Heart left ventricle (tissue), 16 donors: ENCODE measurements at regions of chr4 and their contacts with region 1.

Region 1: DNA sequence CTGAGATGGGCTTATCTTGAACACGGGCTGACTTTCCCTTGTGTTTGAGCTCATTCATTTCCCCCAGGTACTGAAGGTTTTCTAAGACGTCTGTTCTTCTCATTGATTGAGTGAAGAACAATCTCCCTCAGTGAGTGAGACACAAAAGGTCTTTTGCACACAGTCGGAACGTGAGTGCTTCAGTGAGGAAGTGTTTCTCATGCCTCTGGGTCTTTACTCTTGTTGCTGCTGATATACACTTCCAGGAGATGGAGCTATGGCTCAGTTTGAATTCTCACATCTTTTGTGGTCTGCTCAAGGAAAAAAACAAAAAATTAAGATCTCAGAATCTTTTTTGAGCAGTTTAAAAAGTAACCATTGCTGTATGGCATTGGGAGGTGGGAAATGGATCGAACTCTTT is 981.9 kb upstream of the TENM3 start:
- DNase-seq: no peak
- ATAC-seq: peak in 3 of 4 donors; percentile 41 to 58 (median 55)
- H3K4me3 ChIP-seq: no peak overlapping the region
- H3K27ac ChIP-seq: no peak overlapping the region
- H3K4me1 ChIP-seq: peaks cover 0 to 4% (median 0%) of the 10 kb centered on the region in 12 donors
- H3K27me3 ChIP-seq: no peaks in the 10 kb centered on the region
- CTCF ChIP-seq: peak in 10 of 12 donors; percentile 11 to 53 (median 34)
- POLR2A ChIP-seq: no peak

Region 2: GRCh38 chr4:181143250-181143854 is 117.9 kb before region 1 on chr4:
- intact Hi-C with region 1: loop called in 2 of 10 experiments (anchors 5 kb)
- DNase-seq: peak; percentile 47 to 80 (median 67)
- ATAC-seq: peak in 3 of 4 donors; percentile 32 to 65 (median 60)
- H3K4me3 ChIP-seq: no peak overlapping the region
- H3K27ac ChIP-seq: no peak overlapping the region
- H3K4me1 ChIP-seq: no peaks in the 10 kb centered on the region
- H3K27me3 ChIP-seq: peaks cover 0 to 15% (median 0%) of the 10 kb centered on the region in 9 donors
- CTCF ChIP-seq: peak; percentile 82 to 95 (median 90)
- POLR2A ChIP-seq: no peak

Region 3: GRCh38 chr4:181331214-181331613 is 69.9 kb after region 1 on chr4:
- intact Hi-C with region 1: loop called in 1 of 10 experiments (anchors 2 kb)
- DNase-seq: no peak
- ATAC-seq: peak in 2 of 4 donors; percentile 6 to 27
- H3K4me3 ChIP-seq: peak overlapping the region in 1 of 12 donors; percentile 4
- H3K27ac ChIP-seq: peak overlapping the region in 4 of 12 donors; percentile 2 to 66 (median 46)
- H3K4me1 ChIP-seq: peaks cover 0 to 7% (median 0%) of the 10 kb centered on the region in 12 donors
- H3K27me3 ChIP-seq: no peaks in the 10 kb centered on the region
- CTCF ChIP-seq: no peak
- POLR2A ChIP-seq: no peak